Calu3 (cell line): ENCODE measurements at regions of chr14 and their contacts with region 1.

Region 1: DNA sequence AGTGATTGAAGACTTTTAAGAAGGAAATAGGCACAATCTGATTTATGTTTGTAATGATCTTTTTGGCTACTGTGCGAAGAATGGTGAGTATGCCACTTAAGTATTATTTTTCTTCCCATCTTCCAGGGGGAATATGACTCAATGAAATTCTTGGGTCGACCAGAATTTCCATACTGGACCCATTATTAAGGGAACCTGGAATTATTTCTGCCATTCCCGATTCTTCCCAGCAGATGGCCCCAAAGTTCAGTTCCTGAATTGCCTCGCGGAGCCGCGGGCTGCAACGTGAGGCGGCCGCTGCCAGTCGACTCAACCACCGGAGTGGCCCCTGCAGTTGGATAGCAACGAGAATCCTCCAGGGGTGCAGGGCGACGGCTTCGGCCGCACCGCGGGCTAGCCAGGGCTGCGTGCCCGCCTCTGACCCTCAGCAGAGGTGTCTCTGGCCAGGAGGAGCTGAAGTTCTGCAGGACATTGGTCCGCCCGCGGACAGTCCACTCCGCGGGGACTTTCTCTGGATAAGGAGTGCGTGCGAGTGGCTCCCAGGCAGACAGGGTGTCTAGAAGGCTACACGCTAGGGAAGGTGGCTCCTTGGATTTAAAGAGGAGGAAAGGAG is 628 bp upstream of the TSHR start:
- DNase-seq: peak; percentile 77
- H3K4me3 Mint-ChIP-seq: peak overlapping the region; percentile 86
- H3K27ac Mint-ChIP-seq: no peak overlapping the region
- H3K4me1 Mint-ChIP-seq: no peaks in the 10 kb centered on the region
- H3K27me3 Mint-ChIP-seq: peaks cover 81% of the 10 kb centered on the region
- CTCF ChIP-seq: peak; percentile 53

Region 2: DNA sequence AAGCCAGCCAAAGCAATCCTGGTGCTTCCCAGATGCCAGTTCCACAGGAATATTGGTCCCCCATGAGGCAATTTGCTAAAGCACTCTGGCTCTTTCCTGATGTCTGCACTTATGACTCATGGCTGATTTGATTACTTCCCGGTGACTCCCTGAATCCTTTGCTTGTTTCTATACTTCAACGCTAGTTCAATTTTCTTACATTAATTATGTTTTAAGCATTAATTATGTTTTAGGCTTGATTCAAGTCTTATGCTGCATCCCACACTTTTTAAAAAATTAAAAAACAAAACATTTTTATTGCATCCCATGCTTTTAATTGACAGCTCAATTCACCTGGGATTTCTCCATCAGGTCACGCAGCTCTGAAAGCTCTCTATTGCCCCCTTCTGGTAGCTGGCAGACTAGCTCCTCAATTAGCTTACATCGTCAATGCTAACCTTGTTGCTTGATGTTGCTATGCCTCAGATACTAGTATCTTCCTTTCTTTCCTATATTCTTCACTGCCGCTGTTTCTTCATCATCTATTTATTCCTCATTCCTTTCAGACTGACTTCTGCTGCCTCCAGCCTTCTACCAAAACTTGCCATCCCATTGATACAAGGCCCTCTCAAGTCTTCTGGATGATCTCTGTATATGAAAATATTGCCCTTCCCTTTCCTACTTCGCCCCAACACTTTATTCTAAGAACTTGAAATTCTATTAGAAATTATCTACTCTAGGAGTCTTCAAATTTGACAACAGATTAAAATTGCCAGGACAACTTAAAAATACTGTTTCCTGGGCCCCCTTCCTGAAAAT is 32.6 kb after region 1 on chr14:
- CTCF ChIA-PET with region 1: interaction called, 14 read pairs
- intact Hi-C with region 1: loop called (anchors 1 kb)
- DNase-seq: peak; percentile 66
- H3K4me3 Mint-ChIP-seq: no peak overlapping the region
- H3K27ac Mint-ChIP-seq: no peak overlapping the region
- H3K4me1 Mint-ChIP-seq: no peaks in the 10 kb centered on the region
- H3K27me3 Mint-ChIP-seq: peaks cover under 1% of the 10 kb centered on the region
- CTCF ChIP-seq: peak; percentile 62

Region 3: DNA sequence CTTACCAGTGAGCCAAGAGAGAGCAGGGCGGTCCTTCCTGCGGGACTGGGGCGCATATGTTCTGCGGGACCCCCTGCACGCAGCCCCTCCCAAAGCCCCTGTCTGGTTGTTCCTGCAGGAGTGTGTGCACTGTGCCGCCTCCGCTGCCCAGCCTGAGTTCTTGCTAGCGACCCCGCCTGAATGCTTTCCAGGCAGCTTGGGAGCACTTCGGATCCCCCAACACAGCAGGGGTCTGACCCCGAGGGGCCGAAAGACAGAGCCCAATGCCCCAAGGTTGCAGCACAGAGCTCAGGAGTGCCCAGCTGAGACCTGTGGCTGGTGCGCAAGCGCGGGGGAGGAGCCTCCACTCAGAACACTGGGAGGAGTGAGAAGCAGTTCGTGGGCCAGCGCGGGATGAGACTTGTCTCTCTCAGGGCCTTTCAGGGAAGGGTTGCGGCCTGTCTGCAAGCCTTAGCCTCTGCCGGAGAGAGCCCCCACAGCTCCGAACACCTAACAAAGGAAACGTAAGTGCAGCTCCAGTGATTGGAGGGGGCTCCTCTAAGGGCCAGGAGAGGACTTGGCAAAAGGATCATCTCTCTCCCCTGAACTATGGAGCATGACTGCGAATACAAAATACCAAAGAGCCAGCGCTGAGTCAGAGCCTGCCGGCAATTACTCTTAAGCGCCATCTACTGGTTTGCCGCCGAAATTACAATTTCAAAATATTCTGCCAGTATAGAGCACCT is 215.5 kb after region 1 on chr14:
- CTCF ChIA-PET with region 1: no interaction called
- intact Hi-C with region 1: loop called (anchors 2 kb)
- DNase-seq: peak; percentile 78
- H3K4me3 Mint-ChIP-seq: peak overlapping the region; percentile 87
- H3K27ac Mint-ChIP-seq: peak overlapping the region; percentile 47
- H3K4me1 Mint-ChIP-seq: peaks cover 8% of the 10 kb centered on the region
- H3K27me3 Mint-ChIP-seq: no peaks in the 10 kb centered on the region
- CTCF ChIP-seq: peak; percentile 72

Region 4: GRCh38 chr14:81464247-81465002 is 509.6 kb after region 1 on chr14:
- CTCF ChIA-PET with region 1: interaction called, 3 read pairs
- intact Hi-C with region 1: loop called (anchors 5 kb)
- DNase-seq: peak; percentile 65
- H3K4me3 Mint-ChIP-seq: peak overlapping the region; percentile 10
- H3K27ac Mint-ChIP-seq: no peak overlapping the region
- H3K4me1 Mint-ChIP-seq: no peaks in the 10 kb centered on the region
- H3K27me3 Mint-ChIP-seq: no peaks in the 10 kb centered on the region
- CTCF ChIP-seq: peak; percentile 28